ENCODE measurements at regions of chr18 and their contacts with region 1.

Region 1: GRCh38 chr18:13726232-13726971 is at the starts of genes FAM210A and RNMT:
- DNase-seq: peak; percentile 95
- H3K4me3 ChIP-seq: peak within 1 kb of the TSS; percentile 77 to 91
- H3K27ac ChIP-seq: peak within 1 kb of the TSS; percentile 88 to 93
- H3K4me1 ChIP-seq: no peaks in the 10 kb centered on the region
- H3K27me3 ChIP-seq: no peaks in the 10 kb centered on the region
- CTCF ChIP-seq: peak in 2 of 4 experiments; percentile 26 to 30
- POLR2A ChIP-seq: peak; percentile 80
- total RNA-seq, gene FAM210A: 10.3 to 12.4 TPM
- total RNA-seq, gene RNMT: 22.4 to 28.9 TPM

Region 2: DNA sequence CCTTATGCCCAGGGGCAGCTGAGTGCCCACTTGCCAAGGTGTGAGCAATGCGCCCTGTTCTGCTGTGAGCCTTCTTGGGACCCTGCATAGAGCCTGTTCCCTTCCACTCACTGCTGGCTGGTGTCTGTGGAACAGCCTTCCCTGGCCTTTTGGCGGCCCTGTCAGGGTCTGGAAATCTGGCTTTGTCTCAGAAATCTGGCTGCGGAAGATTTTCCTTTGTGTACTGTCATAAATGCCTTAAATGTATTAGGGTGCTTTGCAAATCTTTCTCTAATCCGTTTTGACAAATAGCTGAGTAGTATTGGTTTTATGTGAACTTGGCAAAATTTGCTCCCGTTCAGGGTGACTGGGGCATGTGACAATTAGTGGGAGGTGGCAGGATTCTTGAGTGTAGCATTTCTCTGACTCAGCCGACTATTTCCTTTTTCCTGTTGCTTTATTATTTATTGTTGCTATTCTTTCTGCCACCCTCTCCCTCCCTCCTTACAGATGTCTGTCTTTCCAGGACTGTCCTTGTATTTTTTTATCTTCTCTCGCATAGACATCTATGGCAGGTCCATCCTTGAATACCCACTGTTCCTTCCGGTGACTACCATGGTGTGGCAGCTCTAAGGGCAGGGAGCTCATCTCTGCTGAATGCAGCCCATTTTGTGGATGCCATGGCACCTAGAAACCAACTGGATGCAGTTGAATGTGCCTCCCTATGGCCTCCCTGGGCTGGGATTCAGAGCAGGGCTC is 466.0 kb before region 1 on chr18:
- intact Hi-C with region 1: loop called (anchors 2 kb)
- DNase-seq: no peak
- H3K4me3 ChIP-seq: no peak overlapping the region
- H3K27ac ChIP-seq: peak overlapping the region; percentile 46 to 50
- H3K4me1 ChIP-seq: peaks cover 7% of the 10 kb centered on the region
- H3K27me3 ChIP-seq: no peaks in the 10 kb centered on the region
- CTCF ChIP-seq: no peak
- POLR2A ChIP-seq: no peak

Region 3: DNA sequence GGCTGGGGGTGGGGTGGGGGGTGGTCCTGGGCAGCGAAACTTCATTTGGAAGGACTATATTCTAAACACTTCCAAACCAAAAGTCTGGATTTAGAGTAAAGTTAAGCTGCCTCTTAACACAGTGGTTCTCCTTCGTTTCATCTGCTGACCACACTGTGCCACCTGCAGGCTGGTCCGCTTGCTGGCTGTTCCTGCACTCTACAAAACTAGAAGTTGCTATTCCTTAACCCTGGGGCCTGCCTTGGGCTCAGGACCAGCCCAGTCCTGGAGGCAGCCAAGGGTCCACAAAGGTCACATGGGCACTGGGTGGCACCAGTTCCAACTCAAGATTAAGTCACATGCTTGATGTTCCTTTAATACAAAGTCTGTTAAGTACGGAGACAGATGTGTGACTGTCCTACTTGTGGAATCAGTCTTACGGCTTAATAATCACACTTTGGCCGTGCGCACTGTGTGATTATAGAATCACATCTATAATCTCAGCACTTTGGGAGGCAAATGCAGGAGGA is 195.5 kb before region 1 on chr18:
- intact Hi-C with region 1: loop called (anchors 10 kb)
- DNase-seq: peak; percentile 38
- H3K4me3 ChIP-seq: no peak overlapping the region
- H3K27ac ChIP-seq: no peak overlapping the region
- H3K4me1 ChIP-seq: no peaks in the 10 kb centered on the region
- H3K27me3 ChIP-seq: no peaks in the 10 kb centered on the region
- CTCF ChIP-seq: peak in 3 of 4 experiments; percentile 35 to 56 (median 55)
- POLR2A ChIP-seq: no peak

Region 4: DNA sequence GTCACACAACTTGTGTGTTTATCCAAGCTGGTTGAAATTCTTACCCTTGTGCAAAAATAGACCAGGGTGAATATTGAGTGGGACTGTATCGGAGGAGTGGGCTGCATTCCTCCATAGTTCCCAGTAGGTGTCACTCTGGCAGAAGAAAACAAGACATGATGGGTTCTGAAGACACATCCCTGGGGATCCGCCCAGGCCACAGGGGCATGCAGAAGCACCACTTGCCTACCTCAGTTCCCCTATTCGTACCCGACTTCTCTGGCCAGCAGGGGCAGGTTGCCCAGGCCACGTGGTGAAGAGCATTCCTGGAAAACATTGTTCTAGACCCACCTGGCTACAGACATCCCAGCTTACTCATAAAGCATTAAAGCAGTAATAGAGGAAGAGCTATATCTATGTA is 168.3 kb before region 1 on chr18:
- intact Hi-C with region 1: loop called (anchors 5 kb)
- DNase-seq: no peak
- H3K4me3 ChIP-seq: no peak overlapping the region
- H3K27ac ChIP-seq: no peak overlapping the region
- H3K4me1 ChIP-seq: no peaks in the 10 kb centered on the region
- H3K27me3 ChIP-seq: no peaks in the 10 kb centered on the region
- CTCF ChIP-seq: peak in 2 of 4 experiments; percentile 40 to 51
- POLR2A ChIP-seq: no peak

Region 5: DNA sequence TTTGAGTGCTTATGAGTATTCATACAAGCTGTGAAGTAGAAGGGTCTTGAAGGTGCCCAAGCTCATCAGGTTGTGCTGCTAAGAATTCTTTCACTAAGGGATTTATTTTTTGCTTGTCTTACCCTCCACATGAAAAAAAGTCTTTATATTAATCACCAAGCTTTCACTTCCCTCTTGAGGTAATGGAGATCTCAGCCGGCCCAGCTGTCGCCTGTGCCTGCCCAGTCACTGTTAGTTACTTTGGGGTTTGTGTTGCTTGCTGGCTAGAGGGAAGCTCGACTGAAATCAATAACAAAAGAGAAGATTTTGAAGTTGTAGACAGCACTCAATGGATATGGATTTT is 167.0 kb after region 1 on chr18:
- intact Hi-C with region 1: no loop called
- DNase-seq: no peak
- H3K4me3 ChIP-seq: no peak overlapping the region
- H3K27ac ChIP-seq: no peak overlapping the region
- H3K4me1 ChIP-seq: no peaks in the 10 kb centered on the region
- H3K27me3 ChIP-seq: no peaks in the 10 kb centered on the region
- CTCF ChIP-seq: no peak
- POLR2A ChIP-seq: no peak